Gastrocnemius medialis (tissue), 4 donors: ENCODE measurements at regions of chr1 and their contacts with region 1.

Region 1: DNA sequence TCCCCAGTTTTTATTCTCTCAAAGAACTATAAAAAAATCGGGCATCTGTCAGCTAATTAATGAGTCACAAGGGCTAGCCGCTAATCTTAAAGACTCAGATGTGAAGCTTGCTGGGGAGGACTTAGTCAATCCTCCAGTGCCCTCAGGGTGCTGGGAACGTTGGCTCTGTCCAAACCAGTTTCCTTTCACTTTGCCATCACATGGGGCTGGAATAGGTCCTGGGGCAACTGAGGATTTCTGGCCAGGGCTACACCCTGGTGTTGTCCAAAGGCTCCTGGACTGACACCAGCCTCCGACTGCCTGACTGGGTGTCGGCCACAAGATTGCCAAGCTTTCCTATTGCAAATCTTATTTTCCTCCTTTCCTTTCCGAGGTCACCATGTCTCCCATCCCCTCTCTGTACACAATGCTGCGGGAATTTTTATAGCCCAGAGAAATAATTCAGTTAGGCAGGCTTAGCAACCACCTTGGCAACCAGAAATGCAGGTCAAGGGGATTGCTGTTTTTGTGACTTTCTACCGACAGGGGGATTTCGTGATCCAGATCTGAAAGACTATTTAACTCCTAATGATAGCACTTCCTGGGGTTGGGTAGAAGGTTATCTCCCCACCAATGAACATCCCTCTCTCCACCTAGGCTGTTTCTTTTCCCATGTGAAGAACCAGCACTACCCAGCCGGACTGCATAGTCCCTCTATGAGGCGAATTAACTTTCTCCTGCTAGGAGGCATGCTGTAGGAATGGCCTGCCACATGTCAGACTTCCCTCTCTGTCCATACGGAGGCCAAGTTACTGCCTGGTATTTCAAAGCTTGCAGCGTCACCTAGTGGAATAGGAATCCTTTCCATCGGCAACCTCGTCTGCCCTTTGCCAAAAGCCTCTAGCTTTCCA is 29.9 kb upstream of the CTBS start:
- DNase-seq: peak; percentile 15 to 50
- ATAC-seq: peak; percentile 71 to 96
- H3K4me3 ChIP-seq: peak overlapping the region; percentile 15 to 36 (median 31)
- H3K27ac ChIP-seq: peak overlapping the region; percentile 33 to 72 (median 54)
- H3K4me1 ChIP-seq: peaks cover 0 to 4% of the 10 kb centered on the region in 2 donors
- H3K27me3 ChIP-seq: no peaks in the 10 kb centered on the region
- CTCF ChIP-seq: peak; percentile 41 to 70 (median 52)
- POLR2A ChIP-seq: no peak

Region 2: DNA sequence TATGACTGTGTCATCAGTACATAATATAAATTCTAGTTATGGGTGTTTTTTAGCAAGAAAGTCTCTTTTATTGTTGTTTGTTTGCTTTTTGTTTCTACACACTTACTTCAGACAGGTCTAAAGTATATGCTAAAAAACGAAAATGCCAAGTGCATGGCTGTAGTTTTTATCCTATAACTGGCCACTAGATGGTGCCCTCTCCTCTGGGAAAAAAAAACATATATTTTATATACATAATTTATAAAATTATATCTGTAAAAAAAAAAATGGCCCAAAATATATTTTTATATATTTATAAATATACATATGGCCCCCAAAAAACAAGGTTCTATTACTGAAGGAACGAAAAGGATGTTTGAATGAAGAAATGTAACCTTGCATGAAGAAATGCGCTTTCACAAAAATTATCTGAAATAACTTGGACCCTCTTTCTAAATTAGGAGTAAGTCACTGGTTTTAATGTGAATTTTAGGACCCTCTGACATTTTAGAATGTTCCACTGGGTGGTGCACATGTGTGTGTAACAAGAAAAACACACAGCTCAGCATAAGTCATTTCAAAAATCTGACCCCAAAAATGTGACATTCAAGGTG is 698.8 kb before region 1 on chr1:
- in situ Hi-C with region 1: no loop called
- intact Hi-C with region 1: loop called (anchors 5 kb)
- DNase-seq: no peak
- ATAC-seq: no peak
- H3K4me3 ChIP-seq: no peak overlapping the region
- H3K27ac ChIP-seq: no peak overlapping the region
- H3K4me1 ChIP-seq: no peaks in the 10 kb centered on the region
- H3K27me3 ChIP-seq: no peaks in the 10 kb centered on the region
- CTCF ChIP-seq: peak in 3 of 5 experiments; percentile 22 to 72 (median 62)
- POLR2A ChIP-seq: no peak

Region 3: GRCh38 chr1:83931658-83932253 is 672.4 kb before region 1 on chr1:
- in situ Hi-C with region 1: loop called in 1 of 4 experiments (anchors 25 kb)
- intact Hi-C with region 1: loop called (anchors 10 kb)
- DNase-seq: no peak
- ATAC-seq: peak; percentile 61 to 88
- H3K4me3 ChIP-seq: no peak overlapping the region
- H3K27ac ChIP-seq: no peak overlapping the region
- H3K4me1 ChIP-seq: peaks cover 8 to 9% of the 10 kb centered on the region in 2 donors
- H3K27me3 ChIP-seq: no peaks in the 10 kb centered on the region
- CTCF ChIP-seq: peak in 4 of 5 experiments; percentile 58 to 78 (median 68)
- POLR2A ChIP-seq: no peak

Region 4: GRCh38 chr1:84143796-84144565 is 460.2 kb before region 1 on chr1 and contains the start of gene PRKACB:
- in situ Hi-C with region 1: loop called in 3 of 4 experiments (anchors 25 kb)
- intact Hi-C with region 1: loop called (anchors 5 kb)
- DNase-seq: no peak
- ATAC-seq: no peak
- H3K4me3 ChIP-seq: peak within 1 kb of the TSS in 1 of 4 donors; percentile 6
- H3K27ac ChIP-seq: no peak within 1 kb of the TSS
- H3K4me1 ChIP-seq: no peaks in the 10 kb centered on the region
- H3K27me3 ChIP-seq: no peaks in the 10 kb centered on the region
- CTCF ChIP-seq: no peak
- POLR2A ChIP-seq: peak in 1 of 2 donors; percentile 25
- total RNA-seq, gene PRKACB: 4.2 to 12.4 (median 7.0) TPM

Region 5: DNA sequence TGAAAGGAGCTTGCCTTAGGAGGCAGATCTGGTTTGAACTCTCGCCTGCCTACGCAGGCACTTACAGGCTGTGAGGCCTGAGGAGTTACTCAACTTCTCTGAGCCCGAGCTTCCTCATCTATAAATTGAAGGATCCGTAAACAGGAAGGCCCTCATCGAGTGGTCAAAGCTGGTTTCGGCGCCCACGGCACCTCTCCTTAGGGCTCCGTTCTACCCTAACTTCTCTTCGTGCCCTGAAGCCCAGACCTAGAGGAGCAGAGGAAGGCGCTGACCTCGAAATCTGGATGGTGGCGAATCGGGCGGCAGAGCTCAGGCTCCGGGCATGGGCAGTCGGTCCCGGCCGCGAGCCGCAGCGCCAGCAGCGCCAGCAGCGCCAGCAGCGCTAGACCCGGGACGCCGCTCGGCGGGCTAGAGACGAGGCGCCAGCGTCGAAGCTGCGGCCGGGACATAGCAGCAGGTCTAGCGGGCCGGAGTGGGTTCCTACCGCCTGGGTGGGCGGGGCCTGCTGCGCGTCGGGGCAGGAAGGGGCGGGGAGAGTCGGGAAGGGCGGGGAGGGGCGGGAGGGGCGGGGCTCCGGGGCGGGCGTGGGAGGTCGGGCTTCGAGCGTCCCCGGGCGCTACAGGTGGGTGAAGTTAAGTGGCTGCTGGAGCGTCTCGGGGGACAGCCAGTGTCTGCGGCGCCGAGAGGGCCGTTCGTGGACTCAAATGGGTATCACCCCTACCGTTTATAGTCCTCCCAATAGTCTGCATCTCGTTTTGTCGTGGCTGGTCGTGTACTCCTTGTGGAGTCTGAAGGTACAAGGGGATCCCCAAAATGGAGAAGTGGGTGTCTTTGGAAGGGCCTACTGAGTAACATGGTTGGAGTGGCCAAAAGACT is 30.0 kb before region 1 on chr1 and contains the start of gene CTBS:
- in situ Hi-C with region 1: no loop called
- intact Hi-C with region 1: loop called (anchors 2 kb)
- DNase-seq: peak; percentile 76 to 81
- ATAC-seq: peak; percentile 88 to 92
- H3K4me3 ChIP-seq: peak within 1 kb of the TSS; percentile 70 to 89 (median 88)
- H3K27ac ChIP-seq: peak within 1 kb of the TSS; percentile 91 to 97 (median 96)
- H3K4me1 ChIP-seq: peaks cover 14 to 22% of the 10 kb centered on the region in 2 donors
- H3K27me3 ChIP-seq: no peaks in the 10 kb centered on the region
- CTCF ChIP-seq: no peak
- POLR2A ChIP-seq: peak; percentile 72 to 78
- total RNA-seq, gene CTBS: 4.0 to 6.6 (median 4.7) TPM

Region 6: GRCh38 chr1:84665703-84666317 is 61.6 kb after region 1 on chr1:
- in situ Hi-C with region 1: no loop called
- intact Hi-C with region 1: no loop called
- DNase-seq: no peak
- ATAC-seq: no peak
- H3K4me3 ChIP-seq: no peak overlapping the region
- H3K27ac ChIP-seq: no peak overlapping the region
- H3K4me1 ChIP-seq: no peaks in the 10 kb centered on the region
- H3K27me3 ChIP-seq: no peaks in the 10 kb centered on the region
- CTCF ChIP-seq: no peak
- POLR2A ChIP-seq: no peak

Region 7: GRCh38 chr1:84810343-84810742 is 206.2 kb after region 1 on chr1:
- in situ Hi-C with region 1: no loop called
- intact Hi-C with region 1: no loop called
- DNase-seq: no peak
- ATAC-seq: no peak
- H3K4me3 ChIP-seq: no peak overlapping the region
- H3K27ac ChIP-seq: no peak overlapping the region
- H3K4me1 ChIP-seq: no peaks in the 10 kb centered on the region
- H3K27me3 ChIP-seq: no peaks in the 10 kb centered on the region
- CTCF ChIP-seq: no peak
- POLR2A ChIP-seq: no peak